Gastrocnemius medialis (tissue), 4 donors: ENCODE measurements at regions of chr1 and their contacts with region 1.

Region 1: DNA sequence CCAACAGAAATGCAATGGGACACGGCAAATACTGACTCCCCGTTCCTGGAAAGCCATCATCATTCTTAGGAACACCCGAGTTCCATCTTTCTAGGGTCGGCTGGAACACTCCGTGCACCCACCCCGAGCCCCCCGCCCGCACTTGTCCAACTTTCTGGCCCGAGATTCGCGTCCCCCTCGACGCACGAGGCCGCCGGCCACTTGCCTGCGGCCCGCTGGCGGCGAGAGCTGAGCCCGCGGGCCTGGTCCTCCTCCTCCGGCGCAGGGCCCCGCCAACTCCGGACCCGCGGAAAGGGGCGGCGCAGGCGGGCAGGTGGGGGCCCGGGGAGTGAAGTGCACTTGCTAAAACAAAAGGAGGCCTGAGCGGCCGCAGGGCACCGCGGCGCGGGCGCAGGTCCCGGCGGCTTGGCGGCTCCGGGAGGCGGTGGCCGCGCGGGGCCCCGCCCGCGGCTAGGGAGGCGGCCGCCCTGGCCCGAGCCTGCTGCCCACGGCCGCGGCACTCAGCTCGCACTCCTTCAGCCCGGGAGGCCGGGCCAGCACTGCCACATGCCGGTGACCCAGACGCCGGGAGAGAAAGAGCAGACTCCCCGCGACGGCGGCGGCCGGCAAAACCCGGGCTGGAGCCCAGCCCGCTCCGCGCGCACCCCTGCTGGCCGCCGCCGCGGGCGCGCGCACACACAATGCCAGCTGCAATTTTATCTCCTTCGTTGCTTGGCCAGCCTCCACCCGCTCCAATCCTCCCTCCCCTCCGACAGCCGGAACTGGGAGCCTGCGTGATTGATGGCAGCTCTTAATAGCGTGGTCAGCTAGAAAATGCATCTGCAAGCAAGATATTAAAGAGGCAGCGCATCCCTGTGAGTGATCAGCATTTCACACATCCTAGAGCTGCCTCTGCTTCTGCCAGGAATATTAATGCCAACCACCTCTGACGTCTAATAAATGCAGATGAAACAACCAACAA is 114.3 kb downstream of the RERE start:
- DNase-seq: peak; percentile 85 to 92
- ATAC-seq: peak; percentile 85
- H3K4me3 ChIP-seq: peak overlapping the region; percentile 62 to 70 (median 66)
- H3K27ac ChIP-seq: peak overlapping the region; percentile 85 to 92 (median 88)
- H3K4me1 ChIP-seq: peaks cover 47 to 58% of the 10 kb centered on the region in 2 donors
- H3K27me3 ChIP-seq: no peaks in the 10 kb centered on the region
- CTCF ChIP-seq: peak in 3 of 5 experiments; percentile 27 to 59 (median 32)
- POLR2A ChIP-seq: peak; percentile 87

Region 2: DNA sequence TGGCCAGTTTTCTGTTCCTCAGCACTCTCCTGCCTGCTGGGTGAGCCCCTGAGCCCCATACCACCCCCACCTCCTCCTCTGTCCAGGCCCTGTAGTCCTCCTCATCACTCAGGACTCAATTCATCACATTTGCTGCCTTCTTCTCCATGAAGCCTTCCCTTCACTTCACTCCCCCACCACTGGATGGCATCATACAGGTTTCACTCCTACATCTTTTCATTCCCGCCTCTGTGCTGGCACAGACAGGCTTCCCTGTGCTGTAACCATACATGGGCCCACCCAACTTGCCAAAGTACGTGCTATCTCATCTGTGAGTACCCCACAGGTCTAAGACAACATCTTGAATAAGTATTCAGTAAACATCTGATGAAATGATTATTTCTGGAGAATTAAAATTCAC is 328.3 kb before region 1 on chr1:
- in situ Hi-C with region 1: no loop called
- intact Hi-C with region 1: loop called (anchors 5 kb)
- DNase-seq: peak in 1 of 2 donors; percentile 72
- ATAC-seq: no peak
- H3K4me3 ChIP-seq: no peak overlapping the region
- H3K27ac ChIP-seq: peak overlapping the region; percentile 90 to 95 (median 93)
- H3K4me1 ChIP-seq: peaks cover 98 to 99% of the 10 kb centered on the region in 2 donors
- H3K27me3 ChIP-seq: no peaks in the 10 kb centered on the region
- CTCF ChIP-seq: peak; percentile 30 to 58 (median 43)
- POLR2A ChIP-seq: no peak

Region 3: GRCh38 chr1:8629241-8630091 is 73.7 kb before region 1 on chr1:
- in situ Hi-C with region 1: no loop called
- intact Hi-C with region 1: no loop called
- DNase-seq: no peak
- ATAC-seq: peak in 1 of 2 donors; percentile 8
- H3K4me3 ChIP-seq: no peak overlapping the region
- H3K27ac ChIP-seq: no peak overlapping the region
- H3K4me1 ChIP-seq: peaks cover 27 to 40% of the 10 kb centered on the region in 2 donors
- H3K27me3 ChIP-seq: no peaks in the 10 kb centered on the region
- CTCF ChIP-seq: no peak
- POLR2A ChIP-seq: no peak

Region 4: GRCh38 chr1:8660411-8660828 is 42.7 kb before region 1 on chr1:
- in situ Hi-C with region 1: no loop called
- intact Hi-C with region 1: loop called (anchors 2 kb)
- DNase-seq: peak; percentile 76 to 86
- ATAC-seq: peak; percentile 98 to 99
- H3K4me3 ChIP-seq: no peak overlapping the region
- H3K27ac ChIP-seq: peak overlapping the region; percentile 81 to 85 (median 84)
- H3K4me1 ChIP-seq: peaks cover 56 to 61% of the 10 kb centered on the region in 2 donors
- H3K27me3 ChIP-seq: no peaks in the 10 kb centered on the region
- CTCF ChIP-seq: no peak
- POLR2A ChIP-seq: peak in 1 of 2 donors; percentile 33